ENCODE measurements at regions of chr16 and their contacts with region 1.

Region 1: DNA sequence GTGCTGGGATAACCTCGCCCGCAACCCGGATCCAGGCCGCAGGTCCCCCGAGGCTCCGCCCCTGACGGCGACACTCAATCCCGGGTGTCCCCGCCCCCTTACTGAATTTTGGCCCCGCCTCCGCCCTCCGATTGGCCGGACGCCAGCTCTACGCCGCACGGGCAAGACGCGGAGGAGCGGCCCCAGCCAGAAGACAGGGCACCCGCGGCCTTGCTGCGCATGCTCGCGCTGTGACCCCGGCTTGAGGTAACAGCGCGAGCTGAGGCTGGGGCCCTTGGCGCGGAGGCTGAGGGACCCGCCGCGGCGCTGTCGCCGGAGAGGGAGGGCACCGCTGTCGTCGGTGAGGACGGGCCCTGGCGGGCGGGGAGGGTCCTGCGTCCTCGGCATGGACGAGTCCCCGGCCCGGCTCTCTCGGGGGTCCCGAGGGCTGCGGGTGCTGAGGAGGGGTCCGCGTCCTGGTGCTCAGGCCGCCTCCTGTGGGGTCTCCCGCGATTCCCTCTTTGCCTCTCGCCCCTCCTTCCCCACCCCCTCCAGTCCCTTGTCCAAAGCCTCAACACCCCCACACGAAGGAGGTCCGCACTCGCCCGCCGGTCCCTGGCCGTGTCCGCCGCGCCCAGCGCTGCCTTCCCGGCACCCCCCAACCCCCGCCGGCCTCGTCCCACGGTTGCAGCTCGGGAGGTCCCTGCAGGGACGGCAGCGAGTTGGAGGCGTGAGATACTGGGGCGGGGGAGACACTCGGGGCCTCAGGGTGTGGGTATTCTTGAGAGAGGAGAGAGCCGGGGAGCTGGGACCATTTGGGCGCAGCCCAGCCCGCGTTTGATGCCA is at the start of gene FLYWCH2:
- DNase-seq: peak; percentile 100
- ATAC-seq: peak; percentile 88
- H3K4me3 Mint-ChIP-seq: peak within 1 kb of the TSS; percentile 87
- H3K27ac Mint-ChIP-seq: peak within 1 kb of the TSS; percentile 97
- H3K4me1 Mint-ChIP-seq: peaks cover 14% of the 10 kb centered on the region
- H3K27me3 Mint-ChIP-seq: peaks cover 4% of the 10 kb centered on the region
- total RNA-seq, gene FLYWCH2: 22.5 to 22.8 TPM

Region 2: GRCh38 chr16:2852731-2853507 is 30.3 kb before region 1 on chr16:
- CTCF ChIA-PET with region 1: no interaction called
- POLR2A ChIA-PET with region 1: no interaction called
- DNase-seq: no peak
- ATAC-seq: no peak
- H3K4me3 Mint-ChIP-seq: no peak overlapping the region
- H3K27ac Mint-ChIP-seq: no peak overlapping the region
- H3K4me1 Mint-ChIP-seq: peaks cover 9% of the 10 kb centered on the region
- H3K27me3 Mint-ChIP-seq: peaks cover 11% of the 10 kb centered on the region

Region 3: GRCh38 chr16:2905431-2906387 is 22.5 kb after region 1 on chr16:
- CTCF ChIA-PET with region 1: interaction called, 13 read pairs
- POLR2A ChIA-PET with region 1: interaction called, 4 read pairs
- DNase-seq: peak; percentile 98
- ATAC-seq: peak; percentile 79
- H3K4me3 Mint-ChIP-seq: peak overlapping the region; percentile 91
- H3K27ac Mint-ChIP-seq: peak overlapping the region; percentile 90
- H3K4me1 Mint-ChIP-seq: peaks cover 26% of the 10 kb centered on the region
- H3K27me3 Mint-ChIP-seq: peaks cover 5% of the 10 kb centered on the region

Region 4: GRCh38 chr16:2911580-2912329 is 28.5 kb after region 1 on chr16 and contains the start of gene FLYWCH1:
- CTCF ChIA-PET with region 1: interaction called, 13 read pairs
- POLR2A ChIA-PET with region 1: interaction called, 4 read pairs
- DNase-seq: peak; percentile 99
- ATAC-seq: peak; percentile 96
- H3K4me3 Mint-ChIP-seq: peak within 1 kb of the TSS; percentile 88
- H3K27ac Mint-ChIP-seq: peak within 1 kb of the TSS; percentile 83
- H3K4me1 Mint-ChIP-seq: peaks cover 34% of the 10 kb centered on the region
- H3K27me3 Mint-ChIP-seq: peaks cover 5% of the 10 kb centered on the region
- total RNA-seq, gene FLYWCH1: 44.6 to 48.9 TPM

Region 5: DNA sequence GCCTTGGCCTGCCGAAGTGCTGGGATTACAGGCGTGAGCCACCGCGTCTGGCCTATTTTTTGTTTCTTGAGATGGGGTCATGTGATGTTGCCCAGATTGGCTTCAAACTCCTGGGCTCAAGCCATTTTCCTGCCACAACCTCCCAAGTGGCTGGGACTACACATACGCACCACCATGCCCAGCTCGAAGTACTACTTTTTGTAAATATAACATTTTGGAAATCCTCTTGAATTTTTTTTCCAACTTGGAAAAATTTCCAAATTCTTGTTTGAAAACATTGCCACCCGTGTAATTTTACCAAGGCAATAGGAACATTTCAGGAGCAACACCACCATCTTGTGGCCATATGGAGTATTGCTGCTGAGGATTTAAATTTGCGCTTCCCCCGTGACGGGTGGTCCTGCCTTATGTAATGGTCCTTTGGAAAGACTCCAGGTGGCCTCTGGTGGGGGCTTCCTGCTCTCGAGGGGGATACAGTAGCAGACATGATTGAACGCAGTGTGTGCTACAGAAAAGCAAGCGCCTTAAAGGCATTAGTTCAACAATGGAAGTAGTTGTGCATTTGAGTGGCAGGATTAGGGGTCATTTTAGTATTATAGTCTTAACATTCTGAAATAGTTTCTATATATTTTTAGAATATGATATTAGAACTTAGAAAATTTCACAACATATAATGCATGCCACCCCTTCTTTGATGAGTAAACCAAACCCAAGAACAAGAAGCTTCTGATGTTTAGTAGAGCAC is 36.4 kb after region 1 on chr16:
- CTCF ChIA-PET with region 1: interaction called, 11 read pairs
- POLR2A ChIA-PET with region 1: no interaction called
- DNase-seq: peak; percentile 76
- ATAC-seq: no peak
- H3K4me3 Mint-ChIP-seq: no peak overlapping the region
- H3K27ac Mint-ChIP-seq: peak overlapping the region; percentile 52
- H3K4me1 Mint-ChIP-seq: peaks cover 11% of the 10 kb centered on the region
- H3K27me3 Mint-ChIP-seq: no peaks in the 10 kb centered on the region

Region 6: DNA sequence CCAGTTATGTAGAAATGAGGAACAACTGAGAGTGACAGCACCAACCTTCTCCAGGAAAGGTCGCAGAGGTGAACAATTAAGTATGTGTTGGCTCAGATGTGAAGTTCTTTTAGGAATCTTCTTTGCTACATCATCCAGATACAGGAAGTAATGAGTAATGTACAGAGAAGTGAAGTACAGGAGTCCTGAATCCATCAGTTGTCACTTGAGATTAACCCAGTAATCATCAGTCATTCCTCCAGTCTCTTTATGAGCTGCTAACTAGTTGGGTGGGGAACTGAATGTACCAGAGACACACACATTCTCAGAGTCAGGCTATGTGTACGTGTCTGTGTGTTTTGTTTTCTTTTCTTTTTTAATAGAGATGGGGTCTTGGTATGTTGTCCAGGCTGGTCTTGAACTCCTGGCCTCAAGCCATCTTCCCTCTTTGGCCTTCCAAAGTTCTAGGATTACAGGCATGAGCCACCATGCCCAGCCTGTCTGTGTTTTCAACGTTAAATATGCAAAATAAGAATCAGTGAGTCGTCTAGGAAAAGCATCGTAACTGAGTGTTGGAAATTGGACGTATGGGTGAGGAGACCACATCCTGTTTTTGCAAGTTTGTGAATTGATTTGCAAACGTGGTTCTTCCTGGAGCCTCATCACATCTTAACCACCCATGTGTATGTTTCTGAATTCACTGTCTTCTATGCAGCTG is 331.8 kb after region 1 on chr16:
- CTCF ChIA-PET with region 1: no interaction called
- POLR2A ChIA-PET with region 1: no interaction called
- DNase-seq: peak; percentile 69
- ATAC-seq: peak; percentile 84
- H3K4me3 Mint-ChIP-seq: peak overlapping the region; percentile 24
- H3K27ac Mint-ChIP-seq: peak overlapping the region; percentile 97
- H3K4me1 Mint-ChIP-seq: peaks cover 39% of the 10 kb centered on the region
- H3K27me3 Mint-ChIP-seq: no peaks in the 10 kb centered on the region

Measured in activated CD8-positive, alpha-beta T cell treated with anti-CD3 and anti-CD28 coated beads, Interleukin-2, amount 10 ng/mL, durations not matched to agents 7 days and 5 days (primary cell).